Gastrocnemius medialis (tissue), 4 donors: ENCODE measurements at regions of chr1 and their contacts with region 1.

Region 1: GRCh38 chr1:113904674-113905434 is at the starts of genes AP4B1 and DCLRE1B:
- DNase-seq: peak; percentile 99
- ATAC-seq: peak; percentile 95 to 97
- H3K4me3 ChIP-seq: peak within 1 kb of the TSS; percentile 79 to 93 (median 84)
- H3K27ac ChIP-seq: peak within 1 kb of the TSS; percentile 90 to 91 (median 90)
- H3K4me1 ChIP-seq: peaks cover 20 to 22% of the 10 kb centered on the region in 2 donors
- H3K27me3 ChIP-seq: no peaks in the 10 kb centered on the region
- CTCF ChIP-seq: peak; percentile 50 to 83 (median 78)
- POLR2A ChIP-seq: peak; percentile 65 to 71
- total RNA-seq, gene AP4B1: 6.5 to 11.2 (median 8.4) TPM
- total RNA-seq, gene DCLRE1B: 1.4 to 3.3 (median 1.7) TPM

Region 2: DNA sequence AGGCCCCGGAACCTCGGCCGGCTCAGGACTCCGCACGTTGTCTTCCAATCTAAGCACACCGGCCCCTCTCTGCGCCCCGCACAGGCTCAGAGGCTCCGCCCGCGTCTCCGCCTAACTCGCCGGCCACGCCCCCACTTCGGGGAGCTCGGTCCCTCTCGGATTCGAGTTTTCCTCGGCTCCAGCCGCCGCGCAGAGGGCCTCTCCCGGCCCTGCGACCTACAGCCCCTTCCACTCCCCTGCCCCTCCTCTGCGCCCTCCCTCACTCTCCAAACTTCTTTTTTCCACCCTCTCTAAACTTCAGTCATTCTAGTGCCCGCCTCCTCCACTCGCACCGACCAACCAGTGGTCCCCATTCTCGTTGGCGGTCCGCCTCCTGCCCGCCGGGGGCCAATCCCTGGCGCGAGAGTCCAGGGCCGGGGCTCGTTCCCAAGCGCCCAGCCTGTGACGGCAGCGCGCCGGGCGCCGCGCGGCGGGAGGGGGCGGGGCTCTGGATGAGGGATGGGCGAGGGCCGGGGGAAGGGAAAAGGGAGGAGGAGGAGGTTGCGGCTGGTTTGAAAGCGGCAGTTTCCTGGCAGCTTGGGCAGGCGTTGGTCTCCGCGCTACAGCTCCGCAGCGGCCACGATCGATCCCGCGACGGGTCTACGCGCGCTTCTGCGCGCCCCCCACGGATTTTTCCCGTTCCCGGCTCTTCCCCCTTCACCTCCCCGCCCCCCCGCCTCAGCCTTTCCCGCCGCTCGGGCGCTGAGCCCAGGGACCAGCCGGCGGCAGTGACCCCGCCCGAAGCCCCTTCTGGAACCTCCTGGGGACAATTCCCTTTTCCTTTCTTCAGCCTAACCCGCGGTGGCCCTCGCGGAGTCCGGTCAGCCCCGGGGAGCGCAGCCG is 514.7 kb before region 1 on chr1 and contains the start of gene MAGI3:
- in situ Hi-C with region 1: loop called in 1 of 4 experiments (anchors 25 kb)
- intact Hi-C with region 1: no loop called
- DNase-seq: peak; percentile 93 to 94
- ATAC-seq: peak; percentile 88 to 90
- H3K4me3 ChIP-seq: peak within 1 kb of the TSS; percentile 79 to 96 (median 90)
- H3K27ac ChIP-seq: peak within 1 kb of the TSS; percentile 77 to 86 (median 82)
- H3K4me1 ChIP-seq: peaks cover 20 to 24% of the 10 kb centered on the region in 2 donors
- H3K27me3 ChIP-seq: no peaks in the 10 kb centered on the region
- CTCF ChIP-seq: no peak
- POLR2A ChIP-seq: peak; percentile 62 to 76
- total RNA-seq, gene MAGI3: 2.8 to 4.1 (median 4.0) TPM

Region 3: DNA sequence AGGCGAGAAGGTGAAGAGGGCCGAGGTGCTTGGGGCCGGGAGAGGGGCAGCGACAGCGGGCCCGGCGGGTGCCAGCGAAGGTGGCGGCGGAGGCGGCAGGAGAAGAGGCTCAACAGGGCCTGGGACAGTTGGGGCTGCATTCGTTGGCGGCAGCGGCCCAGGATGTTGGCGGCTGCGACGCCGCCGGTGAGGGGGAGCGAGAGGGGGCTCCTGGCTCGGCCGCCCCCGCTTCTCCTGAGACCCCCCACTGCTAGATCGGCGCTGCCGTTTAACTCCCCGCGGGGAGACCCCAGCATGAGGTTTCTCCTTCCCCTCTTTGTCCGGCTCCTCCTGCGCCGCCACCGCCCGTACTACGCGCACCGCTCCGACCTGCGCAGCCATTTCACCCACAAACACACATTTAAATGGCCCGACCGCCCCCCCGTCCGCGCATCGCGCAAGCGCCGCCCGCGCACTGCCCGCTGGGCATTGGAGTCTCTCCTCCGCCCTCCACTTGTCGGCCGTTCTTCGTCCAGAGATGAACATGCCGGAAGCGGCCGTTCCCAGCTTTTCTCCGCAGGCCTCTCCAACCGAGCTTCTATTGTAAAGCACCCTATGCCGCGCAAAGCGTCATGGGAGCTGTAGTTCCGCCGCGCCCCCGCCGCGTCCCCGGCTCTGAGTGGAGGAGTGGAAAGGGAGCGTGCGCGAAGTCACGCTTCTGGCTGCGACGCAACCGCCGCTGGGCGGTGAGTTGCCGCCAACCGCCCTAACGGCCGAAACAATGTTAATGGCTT is 92.8 kb before region 1 on chr1 and contains the start of gene RSBN1:
- in situ Hi-C with region 1: loop called in 1 of 4 experiments (anchors 10 kb)
- intact Hi-C with region 1: loop called (anchors 1 kb)
- DNase-seq: peak; percentile 99
- ATAC-seq: peak; percentile 97 to 99
- H3K4me3 ChIP-seq: peak within 1 kb of the TSS; percentile 86 to 96 (median 91)
- H3K27ac ChIP-seq: peak within 1 kb of the TSS; percentile 94 to 98 (median 96)
- H3K4me1 ChIP-seq: peaks cover 23 to 38% of the 10 kb centered on the region in 2 donors
- H3K27me3 ChIP-seq: no peaks in the 10 kb centered on the region
- CTCF ChIP-seq: peak in 2 of 5 experiments; percentile 12 to 34
- POLR2A ChIP-seq: peak; percentile 91 to 99
- total RNA-seq, gene RSBN1: 9.9 to 24.8 (median 24.0) TPM

Region 4: GRCh38 chr1:113835642-113836307 is 69.1 kb before region 1 on chr1:
- in situ Hi-C with region 1: loop called in 2 of 4 experiments (anchors 10 kb)
- intact Hi-C with region 1: loop called (anchors 1 kb)
- DNase-seq: no peak
- ATAC-seq: no peak
- H3K4me3 ChIP-seq: no peak overlapping the region
- H3K27ac ChIP-seq: no peak overlapping the region
- H3K4me1 ChIP-seq: no peaks in the 10 kb centered on the region
- H3K27me3 ChIP-seq: no peaks in the 10 kb centered on the region
- CTCF ChIP-seq: peak; percentile 49 to 71 (median 70)
- POLR2A ChIP-seq: no peak

Region 5: GRCh38 chr1:113946678-113947387 is 42.0 kb after region 1 on chr1:
- in situ Hi-C with region 1: no loop called
- intact Hi-C with region 1: loop called (anchors 2 kb)
- DNase-seq: no peak
- ATAC-seq: peak in 1 of 2 donors; percentile 39
- H3K4me3 ChIP-seq: no peak overlapping the region
- H3K27ac ChIP-seq: peak overlapping the region; percentile 44 to 56 (median 48)
- H3K4me1 ChIP-seq: peaks cover 18 to 26% of the 10 kb centered on the region in 2 donors
- H3K27me3 ChIP-seq: no peaks in the 10 kb centered on the region
- CTCF ChIP-seq: no peak
- POLR2A ChIP-seq: no peak